ENCODE measurements at regions of chr15 and their contacts with region 1.

Region 1: DNA sequence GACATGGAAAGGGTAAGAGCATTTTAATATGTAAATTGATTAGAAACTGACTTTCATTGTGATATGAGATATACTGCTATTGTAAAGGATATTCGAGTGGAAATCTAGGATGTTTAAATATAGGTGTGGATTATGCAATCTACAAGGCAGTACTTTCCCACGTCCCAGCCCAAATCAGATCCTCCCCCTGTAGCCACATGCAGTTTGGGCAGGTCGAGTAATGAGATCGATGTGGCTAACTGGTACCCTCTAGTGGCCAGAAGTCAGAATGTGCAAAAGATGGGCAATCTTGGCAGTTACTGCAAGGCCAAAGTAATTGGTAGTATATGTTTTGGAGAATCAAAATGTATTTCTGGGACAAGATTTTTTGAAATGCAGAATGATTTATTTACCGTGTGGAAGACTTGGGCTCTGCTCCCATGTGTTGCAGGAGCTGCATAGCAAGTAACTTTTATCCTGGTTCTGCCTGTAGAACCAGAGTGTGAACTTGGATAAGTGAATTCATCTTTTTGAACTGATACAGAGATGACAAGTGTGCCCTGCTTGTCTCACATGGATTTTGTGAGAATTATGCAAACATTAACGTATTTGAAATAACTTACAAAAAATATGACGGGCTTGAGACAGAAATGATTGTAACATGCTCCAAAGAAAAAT is 94.5 kb upstream of the ADAMTSL3 start:
- DNase-seq: peak in 1 of 2 donors; percentile 9
- ATAC-seq: peak; percentile 55

Region 2: DNA sequence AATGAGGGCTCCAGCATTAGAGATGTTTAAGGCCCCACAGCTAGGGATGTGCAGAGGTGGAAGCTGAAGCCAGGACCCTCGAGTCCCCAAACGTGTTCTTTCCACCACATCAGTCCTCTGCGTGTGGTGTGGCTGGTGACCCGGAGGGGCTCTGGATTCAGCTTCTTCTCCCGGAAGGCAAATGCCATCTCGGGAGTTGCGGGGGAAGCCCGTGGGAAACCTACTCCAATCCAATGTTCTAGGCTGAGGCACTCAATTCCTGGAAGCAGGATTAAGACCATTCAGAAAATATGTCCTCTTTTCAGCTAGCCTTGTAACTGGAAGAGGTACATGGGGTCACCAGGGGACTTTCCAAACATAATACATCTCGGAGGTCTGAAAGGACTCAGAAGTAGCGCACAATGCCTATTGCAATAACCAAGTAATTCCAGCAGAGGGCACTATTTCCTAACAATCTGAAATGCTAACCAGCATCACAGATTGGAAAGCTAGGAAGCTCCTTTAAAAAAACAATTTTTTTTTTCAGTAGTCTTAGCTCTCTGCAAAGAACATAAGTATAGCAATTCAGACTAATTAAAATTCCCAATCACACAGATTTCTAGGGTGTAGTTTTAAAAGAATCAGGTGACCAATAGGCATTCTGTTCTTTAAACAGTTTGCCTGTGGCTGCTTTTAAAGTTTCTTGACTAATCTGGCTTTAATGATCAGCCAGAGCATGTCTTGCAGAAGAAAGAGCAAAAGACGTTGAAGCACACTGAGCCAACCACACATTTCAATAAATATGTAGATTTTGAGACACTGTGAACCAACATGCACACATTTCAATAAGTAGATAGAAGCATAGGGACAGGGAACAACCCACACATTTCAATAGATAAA is 311.0 kb before region 1 on chr15:
- intact Hi-C with region 1: loop called in 1 of 2 experiments (anchors 10 kb)
- DNase-seq: peak in 1 of 2 donors; percentile 5
- ATAC-seq: no peak

Region 3: DNA sequence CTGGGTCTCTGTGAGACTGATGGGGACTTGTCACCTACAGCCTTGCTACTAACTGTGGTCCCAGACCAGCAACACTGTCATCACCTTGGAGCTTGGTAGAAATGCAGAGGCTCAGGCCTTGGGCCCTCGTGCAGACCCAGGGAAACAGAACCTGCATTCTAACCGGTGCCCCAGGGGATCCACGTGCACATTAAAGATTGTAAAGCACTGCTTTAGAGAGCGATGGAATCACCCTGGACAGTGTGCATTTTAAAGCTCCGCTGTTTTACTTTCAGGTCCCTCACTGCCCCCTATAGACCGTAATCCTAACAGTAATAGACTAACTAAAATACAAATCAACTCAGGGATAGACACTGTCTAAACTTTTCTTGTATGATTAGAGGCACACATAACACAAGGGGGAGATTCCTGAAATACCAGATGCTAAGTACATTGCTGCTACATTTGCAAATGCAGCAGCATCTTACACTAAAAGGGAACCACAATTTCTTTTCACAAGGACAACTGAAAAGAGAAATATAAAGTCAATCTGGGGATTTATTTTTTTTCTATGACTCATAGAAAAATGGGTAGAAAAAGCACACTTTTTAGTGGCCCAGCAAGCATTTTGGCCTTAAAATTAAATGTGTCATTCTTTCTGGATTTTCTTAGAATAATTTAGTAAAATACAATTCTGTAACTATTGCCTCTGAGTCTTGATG is 122.8 kb before region 1 on chr15:
- intact Hi-C with region 1: loop called (anchors 5 kb)
- DNase-seq: no peak
- ATAC-seq: no peak

Region 4: DNA sequence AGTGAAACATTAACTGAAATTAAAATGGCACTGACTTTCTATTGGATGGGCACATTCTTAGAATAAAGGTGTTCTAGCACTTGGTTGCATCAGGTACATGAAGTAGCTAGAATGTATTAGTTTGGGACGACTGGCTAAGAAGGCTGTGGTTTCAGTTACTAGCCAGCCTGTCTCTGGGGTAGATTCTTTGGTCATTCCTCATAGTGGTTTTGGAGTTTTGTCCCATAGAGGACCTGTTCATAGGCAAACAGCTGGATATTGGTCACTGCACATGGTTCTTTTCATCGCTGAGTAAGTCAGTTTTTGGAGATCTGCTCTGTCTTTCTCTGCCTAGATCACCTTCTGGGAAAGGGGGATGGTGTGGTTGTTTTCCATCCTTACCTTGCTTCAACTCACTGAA is 149.8 kb after region 1 on chr15:
- intact Hi-C with region 1: no loop called
- DNase-seq: no peak
- ATAC-seq: no peak

Region 5: DNA sequence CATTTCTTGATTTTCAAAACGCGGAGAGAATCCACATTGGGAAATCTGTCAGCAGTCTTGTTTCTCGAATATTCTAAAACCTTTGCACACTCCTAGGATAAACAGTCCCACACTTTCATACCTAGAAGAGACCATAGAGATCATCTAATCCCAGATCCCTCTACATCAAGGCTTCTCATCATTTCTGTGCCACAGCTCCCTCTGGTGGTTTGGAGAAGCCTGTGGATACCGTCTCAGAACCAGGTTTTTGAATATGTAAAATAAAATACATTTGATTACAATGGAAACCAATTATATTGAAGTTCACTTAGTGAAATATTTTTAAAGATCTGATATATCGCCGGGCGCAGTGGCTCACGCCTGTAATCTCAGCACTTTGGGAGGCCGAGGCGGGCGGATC is 464.2 kb after region 1 on chr15:
- intact Hi-C with region 1: loop called in 1 of 2 experiments (anchors 5 kb)
- DNase-seq: peak in 1 of 2 donors; percentile 12
- ATAC-seq: no peak

Measured in left colon (tissue), 2 donors.